ENCODE measurements at regions of chr5 and their contacts with region 1.

Region 1: GRCh38 chr5:13987843-13988464 is 43.5 kb upstream of the DNAH5 start:
- DNase-seq: peak; percentile 40
- ATAC-seq: peak; percentile 53 to 72

Region 2: DNA sequence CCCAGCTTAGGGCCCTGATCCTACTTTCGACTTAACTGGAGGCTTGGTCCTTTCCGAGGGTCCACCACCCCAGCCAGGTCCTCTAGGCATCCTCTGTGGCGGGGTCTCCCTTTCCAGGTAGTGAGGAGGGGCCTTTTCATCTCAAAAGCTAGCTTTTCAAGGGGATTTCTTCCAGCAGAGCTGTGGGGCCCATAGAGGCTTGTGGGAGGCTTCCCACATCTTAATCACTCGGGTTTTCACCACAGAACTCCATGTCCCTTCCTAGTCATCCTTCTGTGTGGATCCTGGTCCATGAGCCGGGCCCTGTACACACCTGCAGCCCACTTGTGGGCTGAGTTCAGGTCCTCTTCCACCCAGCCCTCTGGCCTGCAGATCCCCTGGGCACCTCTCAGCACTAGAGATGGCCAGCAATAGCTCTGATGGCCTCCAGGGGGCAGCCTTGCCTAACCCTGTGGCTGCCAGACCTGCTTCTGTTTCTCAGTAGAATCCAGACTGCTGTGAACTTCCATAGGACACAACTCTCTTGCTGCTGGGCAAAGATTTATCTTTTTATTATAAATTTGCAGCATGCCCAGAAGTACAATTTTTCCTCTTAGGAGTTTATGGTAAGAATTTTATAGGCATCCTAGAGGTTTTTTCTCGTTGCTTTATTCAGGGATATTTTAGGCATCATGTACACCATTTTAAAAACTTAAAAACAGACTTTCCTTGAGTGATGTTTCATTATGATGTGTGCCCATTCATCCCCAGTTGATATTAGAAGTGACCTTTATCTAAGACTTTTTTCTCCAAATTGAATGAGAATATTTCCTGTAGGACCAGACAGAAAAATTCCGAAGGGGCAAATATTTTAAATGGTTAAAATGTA is 364.1 kb after region 1 on chr5:
- intact Hi-C with region 1: loop called in 1 of 2 experiments (anchors 10 kb)
- DNase-seq: peak; percentile 57
- ATAC-seq: peak; percentile 89 to 90

Measured in left cardiac atrium (tissue), 4 donors.